Naive thymus-derived CD4-positive, alpha-beta T cell (primary cell): ENCODE measurements at regions of chr11 and their contacts with region 1.

Region 1: GRCh38 chr11:77547863-77548551 is 41.7 kb upstream of the AQP11 start:
- DNase-seq: peak in 7 of 9 donors; percentile 21 to 64 (median 52)
- ATAC-seq: peak; percentile 65
- H3K4me3 ChIP-seq: no peak overlapping the region
- H3K4me3 Mint-ChIP-seq: peak overlapping the region in 1 of 10 donors; percentile 40
- H3K27ac ChIP-seq: no peak overlapping the region
- H3K27ac Mint-ChIP-seq: no peak overlapping the region
- H3K4me1 ChIP-seq: no peaks in the 10 kb centered on the region
- H3K4me1 Mint-ChIP-seq: peaks cover 0 to 8% (median 4%) of the 10 kb centered on the region in 7 donors
- H3K27me3 ChIP-seq: no peaks in the 10 kb centered on the region
- H3K27me3 Mint-ChIP-seq: no peaks in the 10 kb centered on the region

Region 2: DNA sequence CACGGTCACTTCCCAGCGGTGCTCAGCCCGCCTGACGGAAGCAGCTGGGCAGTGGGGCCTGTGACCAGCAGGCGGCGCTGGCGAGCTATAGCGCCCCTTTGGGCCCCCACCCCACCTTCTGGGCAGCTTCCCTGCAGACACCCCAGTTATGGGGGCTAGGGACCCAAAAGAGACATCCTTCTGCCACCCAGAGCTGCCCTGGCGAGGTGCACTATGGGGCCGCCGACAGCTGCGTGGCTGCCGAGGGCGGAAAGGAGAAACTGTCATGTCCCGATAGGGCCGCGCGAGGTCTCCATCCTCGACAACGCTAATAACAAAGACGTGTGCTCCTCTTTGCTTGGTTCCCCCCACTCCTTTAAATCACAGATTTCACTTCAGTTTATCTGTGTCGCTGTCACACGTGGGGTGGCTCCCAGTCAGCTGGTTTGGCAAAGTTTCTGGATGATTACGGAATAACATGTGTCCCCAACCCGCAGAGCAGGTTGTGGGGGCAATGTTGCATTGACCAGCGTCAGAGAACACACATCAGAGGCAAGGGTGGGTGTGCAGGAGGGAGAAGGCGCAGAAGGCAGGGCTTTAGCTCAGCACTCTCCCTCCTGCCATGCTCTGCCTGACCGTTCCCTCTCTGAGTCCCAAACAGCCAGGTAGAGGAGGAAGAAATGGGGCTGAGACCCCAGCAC is 420.6 kb before region 1 on chr11:
- CTCF ChIA-PET with region 1: interaction called, 16 read pairs
- POLR2A ChIA-PET with region 1: interaction called, 3 read pairs
- intact Hi-C with region 1: loop called in 1 of 2 experiments (anchors 1 kb)
- DNase-seq: peak; percentile 25 to 75 (median 59)
- ATAC-seq: peak; percentile 76
- H3K4me3 ChIP-seq: peak overlapping the region; percentile 40
- H3K4me3 Mint-ChIP-seq: peak overlapping the region; percentile 54 to 76 (median 69)
- H3K27ac ChIP-seq: no peak overlapping the region
- H3K27ac Mint-ChIP-seq: peak overlapping the region in 1 of 9 donors; percentile 88
- H3K4me1 ChIP-seq: peaks cover 3 to 11% of the 10 kb centered on the region in 2 donors
- H3K4me1 Mint-ChIP-seq: peaks cover 0 to 15% (median 6%) of the 10 kb centered on the region in 7 donors
- H3K27me3 ChIP-seq: no peaks in the 10 kb centered on the region
- H3K27me3 Mint-ChIP-seq: peaks cover 0 to 8% (median 0%) of the 10 kb centered on the region in 5 donors

Region 3: DNA sequence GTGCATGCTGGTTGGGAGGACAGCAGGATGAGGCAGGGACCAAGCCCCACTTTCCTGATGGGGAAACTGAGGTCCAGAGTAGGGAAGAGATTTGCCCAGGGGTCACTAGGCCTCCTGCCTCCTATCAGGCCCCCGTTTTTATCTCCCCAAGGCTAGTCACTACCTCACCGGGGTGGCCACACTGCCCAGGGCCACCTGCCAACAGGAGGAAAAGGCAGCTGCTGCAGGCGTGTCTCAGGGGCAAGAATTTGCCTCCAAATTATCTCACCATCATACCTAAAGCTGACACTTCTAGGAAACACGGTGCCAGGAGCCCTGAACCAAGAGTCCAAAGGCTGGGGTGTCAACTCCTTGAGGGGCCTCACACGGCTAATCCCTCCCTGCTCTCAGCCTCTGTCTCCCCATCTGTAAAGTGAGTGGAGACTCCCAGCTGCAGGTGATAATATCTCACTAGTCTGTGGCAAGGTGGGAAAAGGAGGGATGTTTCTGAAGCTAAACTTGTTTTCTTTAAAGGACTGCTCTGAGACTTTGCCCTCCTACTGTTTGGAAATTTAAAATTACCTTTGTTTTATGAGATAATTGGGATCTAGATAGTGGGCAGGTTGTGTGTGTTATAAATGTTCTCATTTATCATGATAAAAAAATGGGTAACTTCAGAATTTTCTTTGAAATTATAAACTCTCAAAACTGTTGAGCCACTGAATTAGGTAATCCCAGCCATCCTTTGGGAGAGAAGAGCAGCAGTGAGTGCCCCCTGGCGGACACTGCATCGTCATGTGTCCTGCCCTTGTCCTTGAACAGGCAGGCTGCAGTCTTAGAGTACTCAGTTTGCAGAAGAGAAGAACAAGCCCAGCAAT is 360.0 kb before region 1 on chr11:
- CTCF ChIA-PET with region 1: interaction called, 4 read pairs
- POLR2A ChIA-PET with region 1: no interaction called
- intact Hi-C with region 1: loop called in 1 of 2 experiments (anchors 1 kb)
- DNase-seq: peak in 8 of 9 donors; percentile 22 to 67 (median 40)
- ATAC-seq: peak; percentile 78
- H3K4me3 ChIP-seq: no peak overlapping the region
- H3K4me3 Mint-ChIP-seq: no peak overlapping the region
- H3K27ac ChIP-seq: no peak overlapping the region
- H3K27ac Mint-ChIP-seq: peak overlapping the region in 1 of 9 donors; percentile 11
- H3K4me1 ChIP-seq: no peaks in the 10 kb centered on the region
- H3K4me1 Mint-ChIP-seq: no peaks in the 10 kb centered on the region
- H3K27me3 ChIP-seq: no peaks in the 10 kb centered on the region
- H3K27me3 Mint-ChIP-seq: peaks cover 0 to 4% (median 0%) of the 10 kb centered on the region in 5 donors

Region 4: DNA sequence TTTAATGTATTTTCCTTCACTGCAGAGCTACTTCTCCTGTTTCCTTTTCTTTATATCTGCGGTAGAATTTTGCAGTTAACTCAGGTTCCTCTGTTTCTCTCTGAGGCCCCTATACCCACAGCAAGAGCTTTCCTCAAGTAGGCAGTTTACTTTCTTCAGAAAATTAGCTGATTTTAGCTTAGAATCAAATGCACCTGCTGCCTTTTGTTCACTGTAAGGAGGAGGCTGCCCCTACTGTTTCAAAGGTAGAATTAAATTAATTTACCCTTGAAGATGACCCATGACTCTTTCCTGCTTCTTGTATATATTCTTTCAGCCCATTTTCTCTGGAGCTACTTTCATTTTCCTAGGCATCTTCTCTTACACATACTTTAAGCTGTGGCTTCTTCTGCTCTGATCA is 177.8 kb before region 1 on chr11:
- CTCF ChIA-PET with region 1: no interaction called
- POLR2A ChIA-PET with region 1: no interaction called
- intact Hi-C with region 1: loop called in 1 of 2 experiments (anchors 10 kb)
- DNase-seq: no peak
- ATAC-seq: no peak
- H3K4me3 ChIP-seq: no peak overlapping the region
- H3K4me3 Mint-ChIP-seq: no peak overlapping the region
- H3K27ac ChIP-seq: no peak overlapping the region
- H3K27ac Mint-ChIP-seq: no peak overlapping the region
- H3K4me1 ChIP-seq: no peaks in the 10 kb centered on the region
- H3K4me1 Mint-ChIP-seq: peaks cover 0 to 18% (median 10%) of the 10 kb centered on the region in 7 donors
- H3K27me3 ChIP-seq: no peaks in the 10 kb centered on the region
- H3K27me3 Mint-ChIP-seq: no peaks in the 10 kb centered on the region

Region 5: GRCh38 chr11:77411717-77412441 is 136.1 kb before region 1 on chr11:
- CTCF ChIA-PET with region 1: interaction called, 3 read pairs
- POLR2A ChIA-PET with region 1: no interaction called
- intact Hi-C with region 1: loop called (anchors 5 kb)
- DNase-seq: peak; percentile 64 to 82 (median 78)
- ATAC-seq: peak; percentile 96
- H3K4me3 ChIP-seq: peak overlapping the region; percentile 88
- H3K4me3 Mint-ChIP-seq: peak overlapping the region; percentile 88 to 98 (median 94)
- H3K27ac ChIP-seq: peak overlapping the region; percentile 66
- H3K27ac Mint-ChIP-seq: peak overlapping the region; percentile 65 to 94 (median 82)
- H3K4me1 ChIP-seq: peaks cover 14 to 19% of the 10 kb centered on the region in 2 donors
- H3K4me1 Mint-ChIP-seq: peaks cover 33 to 54% (median 39%) of the 10 kb centered on the region in 7 donors
- H3K27me3 ChIP-seq: no peaks in the 10 kb centered on the region
- H3K27me3 Mint-ChIP-seq: no peaks in the 10 kb centered on the region

Region 6: DNA sequence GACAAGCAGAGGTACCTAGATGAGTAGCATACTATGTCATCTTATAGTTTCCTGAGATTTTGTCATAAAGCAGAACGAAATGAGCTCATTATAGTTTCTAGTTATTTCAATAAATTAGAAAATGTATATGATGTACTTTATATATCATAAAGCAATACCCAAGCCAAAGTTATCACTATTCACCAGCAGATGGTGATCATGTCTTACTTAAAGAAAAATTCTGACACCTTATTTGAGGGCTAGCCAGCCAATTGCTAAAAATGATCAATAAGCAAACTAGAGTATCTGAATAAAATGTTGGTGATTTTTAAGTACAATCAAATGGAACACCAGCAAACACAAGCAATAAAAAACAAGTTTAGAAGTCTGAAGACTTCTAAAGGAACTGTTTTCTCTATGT is 228.4 kb after region 1 on chr11:
- CTCF ChIA-PET with region 1: no interaction called
- POLR2A ChIA-PET with region 1: no interaction called
- intact Hi-C with region 1: no loop called
- DNase-seq: peak in 6 of 9 donors; percentile 11 to 42 (median 25)
- ATAC-seq: no peak
- H3K4me3 ChIP-seq: no peak overlapping the region
- H3K4me3 Mint-ChIP-seq: no peak overlapping the region
- H3K27ac ChIP-seq: no peak overlapping the region
- H3K27ac Mint-ChIP-seq: peak overlapping the region in 1 of 9 donors; percentile 2
- H3K4me1 ChIP-seq: peaks cover 7 to 17% of the 10 kb centered on the region in 2 donors
- H3K4me1 Mint-ChIP-seq: peaks cover 21 to 86% (median 69%) of the 10 kb centered on the region in 7 donors
- H3K27me3 ChIP-seq: no peaks in the 10 kb centered on the region
- H3K27me3 Mint-ChIP-seq: no peaks in the 10 kb centered on the region

Region 7: GRCh38 chr11:77833302-77833701 is 285.3 kb after region 1 on chr11:
- CTCF ChIA-PET with region 1: no interaction called
- POLR2A ChIA-PET with region 1: no interaction called
- intact Hi-C with region 1: no loop called
- DNase-seq: no peak
- ATAC-seq: no peak
- H3K4me3 ChIP-seq: no peak overlapping the region
- H3K4me3 Mint-ChIP-seq: no peak overlapping the region
- H3K27ac ChIP-seq: no peak overlapping the region
- H3K27ac Mint-ChIP-seq: no peak overlapping the region
- H3K4me1 ChIP-seq: no peaks in the 10 kb centered on the region
- H3K4me1 Mint-ChIP-seq: peaks cover 0 to 2% (median 0%) of the 10 kb centered on the region in 7 donors
- H3K27me3 ChIP-seq: no peaks in the 10 kb centered on the region
- H3K27me3 Mint-ChIP-seq: no peaks in the 10 kb centered on the region